Activated CD8-positive, alpha-beta T cell treated with anti-CD3 and anti-CD28 coated beads, Interleukin-2, amount 10 ng/mL, durations not matched to agents 7 days and 5 days (primary cell): ENCODE measurements at regions of chr1 and their contacts with region 1.

Region 1: DNA sequence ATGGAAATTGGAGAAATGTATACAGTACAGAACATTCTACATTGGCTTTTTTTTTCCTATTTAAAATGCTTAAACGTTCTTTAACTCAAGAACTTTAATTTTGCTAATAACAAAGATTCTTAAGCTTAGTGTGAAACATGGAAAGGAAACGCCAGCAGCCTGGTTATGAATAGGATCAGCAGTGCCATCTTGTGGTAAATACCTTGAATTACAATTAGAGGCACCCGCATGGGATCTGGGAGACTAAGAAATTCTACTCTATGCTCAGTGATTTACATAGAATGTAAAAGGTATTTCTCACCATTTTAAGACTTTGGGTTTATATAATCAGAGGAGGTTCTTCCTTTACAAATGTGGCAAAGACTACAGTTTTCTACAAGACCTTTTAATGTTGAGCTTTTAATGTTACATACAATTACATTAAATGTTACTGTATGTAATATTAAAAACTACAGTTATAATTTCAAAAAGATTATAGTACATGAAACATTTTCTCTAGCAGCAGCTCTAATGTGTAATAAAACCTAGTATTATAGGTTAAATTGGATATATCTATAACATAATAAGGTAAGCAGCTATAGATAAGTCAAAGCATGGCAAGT is 32.1 kb upstream of the APOBEC4 start:
- DNase-seq: peak; percentile 46
- ATAC-seq: peak; percentile 60
- H3K4me3 Mint-ChIP-seq: no peak overlapping the region
- H3K27ac Mint-ChIP-seq: no peak overlapping the region
- H3K4me1 Mint-ChIP-seq: no peaks in the 10 kb centered on the region
- H3K27me3 Mint-ChIP-seq: peaks cover 28% of the 10 kb centered on the region

Region 2: GRCh38 chr1:183635606-183636333 is 49.4 kb before region 1 on chr1 and contains the start of gene ARPC5:
- CTCF ChIA-PET with region 1: interaction called, 15 read pairs
- POLR2A ChIA-PET with region 1: no interaction called
- DNase-seq: peak; percentile 96
- ATAC-seq: peak; percentile 94
- H3K4me3 Mint-ChIP-seq: peak within 1 kb of the TSS; percentile 100
- H3K27ac Mint-ChIP-seq: peak within 1 kb of the TSS; percentile 99
- H3K4me1 Mint-ChIP-seq: peaks cover 31% of the 10 kb centered on the region
- H3K27me3 Mint-ChIP-seq: peaks cover 11% of the 10 kb centered on the region
- total RNA-seq, gene ARPC5: 271 to 274 TPM

Region 3: DNA sequence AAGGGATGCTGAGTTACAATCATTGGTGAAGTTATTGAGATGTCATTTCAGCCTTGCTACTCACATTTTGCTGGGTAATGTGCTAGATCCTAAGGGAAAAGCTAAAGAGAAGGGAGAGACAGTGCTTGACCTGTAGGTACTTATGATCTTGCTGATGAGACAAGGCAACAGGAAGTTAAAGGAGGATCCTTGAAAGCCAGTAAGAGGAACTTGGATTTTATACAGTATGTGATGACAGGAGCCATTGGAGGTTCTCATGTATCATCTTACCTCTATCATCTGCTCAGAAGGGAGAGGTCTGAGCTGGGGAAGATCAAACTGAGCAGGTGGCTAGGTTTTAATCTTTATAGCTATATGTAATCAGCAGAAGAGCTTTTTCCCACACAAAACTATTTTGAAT is 38.4 kb before region 1 on chr1:
- CTCF ChIA-PET with region 1: interaction called, 131 read pairs
- POLR2A ChIA-PET with region 1: no interaction called
- DNase-seq: no peak
- ATAC-seq: no peak
- H3K4me3 Mint-ChIP-seq: no peak overlapping the region
- H3K27ac Mint-ChIP-seq: no peak overlapping the region
- H3K4me1 Mint-ChIP-seq: peaks cover 7% of the 10 kb centered on the region
- H3K27me3 Mint-ChIP-seq: no peaks in the 10 kb centered on the region

Region 4: DNA sequence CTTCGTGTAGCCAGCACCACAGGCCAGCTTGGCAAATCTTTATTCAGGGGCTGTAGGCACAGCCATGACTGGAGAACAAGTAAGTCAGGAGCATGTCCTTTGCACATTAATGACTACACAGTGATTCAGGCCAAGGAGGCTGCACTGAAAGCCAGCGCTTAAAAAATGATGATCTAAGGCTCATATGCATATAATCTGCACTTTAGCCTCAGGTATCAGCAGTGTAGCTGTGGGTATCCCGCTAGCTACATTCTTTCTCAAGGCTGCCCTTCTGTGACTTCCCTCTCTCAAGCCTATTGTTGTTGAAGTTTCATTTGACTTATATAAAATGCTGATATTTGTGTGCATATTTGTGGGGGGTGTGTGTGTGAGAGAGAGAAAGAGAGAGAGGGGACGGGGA is 57.1 kb after region 1 on chr1:
- CTCF ChIA-PET with region 1: no interaction called
- POLR2A ChIA-PET with region 1: no interaction called
- DNase-seq: no peak
- ATAC-seq: no peak
- H3K4me3 Mint-ChIP-seq: no peak overlapping the region
- H3K27ac Mint-ChIP-seq: no peak overlapping the region
- H3K4me1 Mint-ChIP-seq: no peaks in the 10 kb centered on the region
- H3K27me3 Mint-ChIP-seq: no peaks in the 10 kb centered on the region

Region 5: DNA sequence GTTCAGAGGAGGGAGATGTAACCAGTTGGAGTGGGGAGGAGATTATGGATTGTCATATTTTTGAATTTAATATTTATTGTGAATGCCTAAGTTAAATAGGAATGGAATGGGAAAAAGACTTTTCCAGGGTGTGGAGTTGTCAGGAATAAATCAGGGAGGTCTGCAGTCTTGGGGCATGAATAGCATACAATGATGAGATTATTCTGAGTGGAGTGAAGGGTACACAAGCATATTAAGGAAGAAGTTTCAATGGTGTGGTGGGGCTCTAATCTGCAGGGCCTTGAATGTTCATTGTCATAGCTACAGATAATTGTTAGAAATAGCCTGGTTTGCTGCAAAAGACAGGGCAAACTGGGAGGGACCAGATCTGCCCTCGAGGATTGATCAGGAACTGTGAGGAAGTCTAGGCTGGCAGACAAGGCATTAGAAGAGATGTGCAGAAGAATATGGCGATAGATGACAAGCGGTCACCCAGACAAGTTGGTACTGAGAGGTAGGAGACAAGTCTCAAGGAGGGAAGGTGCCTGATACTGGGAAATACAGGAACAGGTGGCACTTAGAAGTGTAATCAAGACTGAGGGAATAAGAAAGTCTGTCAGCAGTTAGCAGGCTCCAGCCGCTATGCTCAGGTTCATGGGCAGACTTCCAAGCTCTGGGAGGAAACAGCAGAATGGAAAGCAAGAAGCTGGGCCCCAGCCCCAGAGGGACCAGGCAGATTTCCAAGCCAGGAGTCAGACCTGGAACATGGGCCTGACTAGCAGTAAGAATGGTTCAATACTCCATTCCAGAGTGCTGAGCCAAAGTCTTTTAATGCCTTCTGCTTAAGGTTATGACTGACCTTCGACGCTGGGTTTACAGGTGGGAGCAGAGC is 98.8 kb after region 1 on chr1:
- CTCF ChIA-PET with region 1: no interaction called
- POLR2A ChIA-PET with region 1: no interaction called
- DNase-seq: no peak
- ATAC-seq: no peak
- H3K4me3 Mint-ChIP-seq: no peak overlapping the region
- H3K27ac Mint-ChIP-seq: no peak overlapping the region
- H3K4me1 Mint-ChIP-seq: no peaks in the 10 kb centered on the region
- H3K27me3 Mint-ChIP-seq: no peaks in the 10 kb centered on the region